ENCODE measurements at regions of chr12 and their contacts with region 1.

Region 1: GRCh38 chr12:109597795-109598427 is 24.3 kb downstream of the MVK start:
- DNase-seq: peak; percentile 83 to 95
- ATAC-seq: peak; percentile 92 to 97
- H3K4me3 ChIP-seq: no peak overlapping the region
- H3K27ac ChIP-seq: peak overlapping the region in 1 of 2 experiments; percentile 62; a peak in 2 of 6 replicates
- H3K4me1 ChIP-seq: peaks cover 4% of the 10 kb centered on the region
- CTCF ChIP-seq: peak; percentile 88
- EP300 ChIP-seq: no peak
- POLR2A ChIP-seq: no peak
- RAD21 ChIP-seq: peak; percentile 88 to 89

Region 2: DNA sequence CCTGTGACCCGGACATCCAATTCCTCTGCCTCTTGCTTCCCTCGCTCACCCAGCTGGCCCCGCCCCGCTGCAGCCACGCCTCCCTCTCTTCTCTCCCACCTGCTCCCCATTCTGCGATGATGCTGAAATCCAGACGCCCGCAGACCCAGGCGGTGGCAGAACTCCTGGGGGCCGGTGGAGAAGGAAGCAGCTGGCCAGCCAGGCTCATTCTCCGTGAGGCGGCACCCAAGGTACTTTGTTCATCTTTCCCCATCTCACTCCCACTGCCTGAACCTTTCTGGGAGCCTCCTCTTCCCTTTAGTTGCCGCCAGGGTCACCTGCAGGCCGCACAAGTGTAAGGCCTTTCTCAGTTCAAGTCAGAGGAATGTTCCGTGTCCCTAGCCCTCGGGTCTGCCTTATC is 324.6 kb before region 1 on chr12:
- CTCF ChIA-PET with region 1: no interaction called
- POLR2A ChIA-PET with region 1: no interaction called
- DNase-seq: no peak
- ATAC-seq: no peak
- H3K4me3 ChIP-seq: no peak overlapping the region
- H3K27ac ChIP-seq: no peak overlapping the region
- H3K4me1 ChIP-seq: peaks cover 19% of the 10 kb centered on the region
- CTCF ChIP-seq: no peak
- EP300 ChIP-seq: no peak
- POLR2A ChIP-seq: no peak
- RAD21 ChIP-seq: no peak

Region 3: GRCh38 chr12:109428037-109428629 is 169.8 kb before region 1 on chr12:
- CTCF ChIA-PET with region 1: interaction called, 10 read pairs
- POLR2A ChIA-PET with region 1: no interaction called
- DNase-seq: peak; percentile 74 to 85
- ATAC-seq: peak; percentile 80 to 88
- H3K4me3 ChIP-seq: no peak overlapping the region
- H3K27ac ChIP-seq: no peak overlapping the region
- H3K4me1 ChIP-seq: 0 out of 3 replicates have a peak, but pooled peaks cover 3% of the 10 kb centered on the region
- CTCF ChIP-seq: peak; percentile 92
- EP300 ChIP-seq: no peak
- POLR2A ChIP-seq: no peak
- RAD21 ChIP-seq: peak; percentile 57 to 72

Region 4: GRCh38 chr12:109439181-109439580 is 158.7 kb before region 1 on chr12:
- CTCF ChIA-PET with region 1: no interaction called
- POLR2A ChIA-PET with region 1: no interaction called
- DNase-seq: no peak
- ATAC-seq: no peak
- H3K4me3 ChIP-seq: no peak overlapping the region
- H3K27ac ChIP-seq: no peak overlapping the region
- H3K4me1 ChIP-seq: no peaks in the 10 kb centered on the region
- CTCF ChIP-seq: no peak
- EP300 ChIP-seq: no peak
- POLR2A ChIP-seq: no peak
- RAD21 ChIP-seq: no peak

Region 5: DNA sequence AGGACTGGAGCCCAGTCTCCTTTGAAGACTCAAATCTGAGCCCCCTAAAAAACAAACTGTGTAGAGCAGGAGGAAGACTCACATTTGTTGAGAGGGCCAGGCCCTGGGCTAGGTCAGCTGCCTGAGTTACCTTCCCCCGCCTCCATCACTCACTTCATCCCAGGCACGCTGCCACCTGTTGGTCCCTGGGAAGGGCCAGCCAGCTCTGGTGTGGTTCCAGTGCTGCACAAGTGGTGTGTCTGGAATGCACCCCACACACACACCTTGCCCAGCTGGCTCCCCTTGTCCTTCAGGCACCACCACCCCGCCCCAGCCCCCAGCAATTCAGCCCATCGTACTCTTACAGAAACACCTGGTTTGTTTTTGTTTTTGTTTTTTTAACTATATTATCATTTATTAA is 15.3 kb before region 1 on chr12:
- CTCF ChIA-PET with region 1: interaction called, 123 read pairs
- POLR2A ChIA-PET with region 1: no interaction called
- DNase-seq: peak in 1 of 2 experiments; percentile 23
- ATAC-seq: peak; percentile 22 to 68; a peak in 3 of 6 replicates
- H3K4me3 ChIP-seq: no peak overlapping the region
- H3K27ac ChIP-seq: no peak overlapping the region
- H3K4me1 ChIP-seq: peaks cover 9% of the 10 kb centered on the region; the same call in 2 of the 3 replicates
- CTCF ChIP-seq: no peak
- EP300 ChIP-seq: no peak
- POLR2A ChIP-seq: no peak
- RAD21 ChIP-seq: no peak

Region 6: GRCh38 chr12:109639151-109639872 is 41.4 kb after region 1 on chr12:
- CTCF ChIA-PET with region 1: interaction called, 12 read pairs
- POLR2A ChIA-PET with region 1: no interaction called
- DNase-seq: peak in 1 of 2 experiments; percentile 24
- ATAC-seq: no peak; a peak in 2 of 6 replicates
- H3K4me3 ChIP-seq: no peak overlapping the region
- H3K27ac ChIP-seq: no peak overlapping the region
- H3K4me1 ChIP-seq: no peaks in the 10 kb centered on the region
- CTCF ChIP-seq: no peak
- EP300 ChIP-seq: no peak
- POLR2A ChIP-seq: no peak
- RAD21 ChIP-seq: no peak

Region 7: DNA sequence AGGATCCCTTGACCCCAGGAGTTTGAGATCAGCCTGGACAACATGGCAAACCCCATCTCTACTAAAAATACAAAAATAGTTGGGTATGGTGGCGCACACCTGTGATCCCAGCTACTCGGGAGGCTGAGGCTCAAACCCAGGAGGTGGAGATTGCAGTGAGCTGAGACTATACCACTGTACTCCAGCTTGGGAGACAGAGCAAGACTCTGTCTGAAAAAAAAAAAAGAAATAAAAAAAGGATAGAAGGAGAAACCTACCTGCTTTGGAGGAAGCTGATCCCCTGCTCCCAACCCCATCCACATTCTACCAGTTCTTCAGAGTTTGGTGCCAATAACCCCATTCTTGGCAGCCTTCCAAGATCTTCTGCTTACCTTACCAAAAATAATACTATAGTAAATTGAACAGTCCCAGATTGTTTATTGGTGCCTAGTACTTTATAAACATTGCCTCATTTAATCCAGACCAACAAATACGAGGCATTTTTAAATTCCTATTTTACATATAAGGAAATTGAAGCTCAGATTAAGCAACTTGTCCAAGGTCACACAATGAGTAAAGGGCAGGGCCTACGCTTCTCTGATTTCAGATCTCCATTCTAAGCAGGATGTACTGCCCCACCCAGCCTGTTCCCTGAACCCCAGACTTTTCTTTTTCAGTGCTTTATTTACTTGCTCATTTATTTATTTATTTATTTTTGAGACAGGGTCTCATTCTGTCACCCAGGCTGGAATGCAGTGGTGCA is 82.5 kb after region 1 on chr12:
- CTCF ChIA-PET with region 1: interaction called, 10 read pairs
- POLR2A ChIA-PET with region 1: interaction called, 5 read pairs
- DNase-seq: no peak
- ATAC-seq: no peak
- H3K4me3 ChIP-seq: no peak overlapping the region
- H3K27ac ChIP-seq: no peak overlapping the region
- H3K4me1 ChIP-seq: no peaks in the 10 kb centered on the region
- CTCF ChIP-seq: no peak
- EP300 ChIP-seq: no peak
- POLR2A ChIP-seq: no peak
- RAD21 ChIP-seq: no peak

Region 8: DNA sequence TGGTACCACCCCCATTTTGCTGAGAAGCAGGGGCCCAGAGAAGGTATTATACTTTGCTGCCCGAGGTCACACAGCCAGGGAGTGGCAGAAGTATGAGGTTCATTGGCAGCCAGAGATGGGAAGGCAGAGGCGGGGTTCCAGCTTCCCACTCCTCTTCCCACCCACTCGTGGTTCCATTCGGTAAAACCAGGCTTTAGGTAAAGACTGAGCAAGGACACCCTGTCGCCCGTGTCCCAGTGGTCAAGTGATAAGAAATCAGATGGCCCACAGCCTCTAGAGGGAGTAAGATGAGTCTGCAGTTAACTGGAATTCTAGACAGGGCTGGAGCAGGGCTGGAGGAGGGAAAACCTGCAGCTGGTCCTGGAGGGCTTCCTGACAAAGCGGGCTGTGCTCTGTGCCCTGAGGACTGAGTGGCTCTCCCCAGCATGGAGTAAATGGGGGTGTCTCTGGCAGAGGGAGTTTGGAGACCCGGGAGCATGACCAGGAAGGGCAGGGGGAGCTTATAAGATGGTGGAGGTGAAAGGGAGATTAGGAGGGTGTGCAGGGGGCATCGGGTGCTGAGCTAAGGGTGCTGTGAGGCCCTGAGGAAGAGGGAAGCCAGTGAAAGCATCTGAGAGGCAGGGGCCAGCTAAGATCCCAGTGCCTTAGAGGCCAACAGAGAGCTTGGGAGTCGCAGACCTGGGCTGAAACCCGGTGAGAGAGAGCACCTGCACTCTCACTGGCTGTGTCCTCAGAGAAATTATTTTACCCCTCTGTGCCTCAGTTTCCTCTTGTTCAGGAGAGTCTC is 121.5 kb after region 1 on chr12:
- CTCF ChIA-PET with region 1: interaction called, 42 read pairs
- POLR2A ChIA-PET with region 1: interaction called, 7 read pairs
- DNase-seq: peak in 1 of 2 experiments; percentile 49
- ATAC-seq: peak; percentile 57 to 79
- H3K4me3 ChIP-seq: no peak overlapping the region
- H3K27ac ChIP-seq: no peak overlapping the region
- H3K4me1 ChIP-seq: peaks cover 7% of the 10 kb centered on the region; the same call in 2 of the 3 replicates
- CTCF ChIP-seq: peak; percentile 22; the same call in 1 of the 3 replicates
- EP300 ChIP-seq: no peak
- POLR2A ChIP-seq: no peak
- RAD21 ChIP-seq: no peak; a peak in 1 of 5 replicates

Region 9: DNA sequence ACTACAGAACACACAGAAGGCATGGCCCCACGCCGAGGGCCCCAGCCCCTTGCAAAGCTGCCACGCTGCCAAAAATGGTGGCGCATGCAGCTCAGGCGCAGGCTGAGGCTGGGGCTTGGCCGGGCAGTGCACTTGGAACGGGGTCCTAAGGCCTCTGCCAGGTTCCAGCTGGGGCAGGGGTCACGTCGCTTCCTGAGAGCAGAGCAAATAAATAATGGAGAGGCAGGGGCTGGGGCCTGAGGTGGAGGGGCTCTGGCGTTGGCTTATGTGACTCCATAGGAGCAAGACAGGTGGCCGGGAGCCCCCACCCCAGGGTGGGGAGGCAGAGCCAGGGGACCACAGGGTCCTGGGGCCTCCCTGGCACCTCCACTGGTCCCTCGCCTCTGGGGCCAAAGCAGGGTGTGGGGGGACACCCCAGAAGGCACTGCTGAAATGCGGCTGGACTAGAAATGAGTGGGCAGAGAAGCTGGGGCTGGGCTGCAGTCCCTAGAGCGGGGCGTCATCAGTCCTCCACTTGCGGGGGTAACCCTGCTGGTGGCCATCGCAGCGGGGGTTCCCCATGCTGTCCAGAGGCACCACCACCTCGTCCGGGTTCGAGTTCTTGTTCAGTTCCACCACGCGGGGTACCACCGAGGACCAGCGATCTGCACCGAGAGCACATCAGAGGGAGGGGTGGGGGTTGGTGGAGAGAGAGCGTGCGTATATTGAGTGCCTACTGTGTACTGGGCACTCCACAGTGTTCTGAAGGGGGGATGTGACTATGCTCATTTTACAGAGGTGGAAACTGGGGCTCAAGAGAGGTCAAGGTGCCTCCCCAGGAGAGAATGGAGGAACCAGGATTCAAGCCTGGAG is 185.4 kb after region 1 on chr12:
- CTCF ChIA-PET with region 1: interaction called, 162 read pairs
- POLR2A ChIA-PET with region 1: no interaction called
- DNase-seq: no peak
- ATAC-seq: no peak
- H3K4me3 ChIP-seq: no peak overlapping the region
- H3K27ac ChIP-seq: no peak overlapping the region
- H3K4me1 ChIP-seq: no peaks in the 10 kb centered on the region
- CTCF ChIP-seq: no peak
- EP300 ChIP-seq: no peak
- POLR2A ChIP-seq: no peak
- RAD21 ChIP-seq: no peak